ENCODE measurements at regions of chr3 and their contacts with region 1.

Region 1: DNA sequence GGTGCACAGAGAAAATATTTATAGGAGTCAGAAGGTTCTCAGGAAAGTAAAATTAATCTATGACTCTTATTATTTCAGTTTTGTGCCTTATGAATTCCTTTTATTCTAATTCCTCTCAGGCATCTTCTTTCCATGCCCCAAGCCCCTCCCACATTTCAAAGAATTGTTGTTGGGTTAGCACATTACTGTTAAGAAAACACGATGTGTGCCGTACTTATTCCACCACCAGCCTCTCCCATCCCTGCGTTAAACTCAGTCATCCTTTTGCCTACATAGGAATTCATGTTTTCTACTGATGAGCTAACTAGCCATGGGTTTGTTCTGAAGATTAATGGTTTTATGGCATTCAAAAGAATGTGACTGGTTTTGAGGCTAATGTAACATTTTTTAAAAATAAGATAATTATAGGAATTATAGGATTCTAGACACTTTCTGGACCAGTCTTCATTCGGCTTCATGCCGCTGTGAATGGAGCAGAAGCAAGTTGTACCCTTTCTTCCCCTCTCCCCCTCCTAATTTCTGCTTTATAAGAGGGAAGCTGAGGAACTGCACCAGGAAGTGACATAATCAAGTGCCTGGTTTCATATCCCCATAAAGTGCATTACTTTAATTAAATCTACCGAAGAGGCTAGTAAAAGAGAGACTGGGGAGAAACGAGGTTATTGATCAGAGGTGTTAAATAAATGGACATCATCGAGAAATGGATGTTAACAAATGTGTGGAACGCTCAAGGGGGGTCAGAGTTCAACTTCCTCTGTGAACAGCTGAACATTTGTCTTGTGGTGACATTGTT is 12.3 kb upstream of the MB21D2 start:
- DNase-seq: no peak
- ATAC-seq: peak in 2 of 8 donors; percentile 37 to 39
- H3K4me3 ChIP-seq: no peak overlapping the region
- H3K27ac ChIP-seq: peak overlapping the region in 1 of 10 donors; percentile 44
- H3K4me1 ChIP-seq: peaks cover 0 to 19% (median 0%) of the 10 kb centered on the region in 9 donors
- H3K27me3 ChIP-seq: no peaks in the 10 kb centered on the region
- CTCF ChIP-seq: no peak

Region 2: DNA sequence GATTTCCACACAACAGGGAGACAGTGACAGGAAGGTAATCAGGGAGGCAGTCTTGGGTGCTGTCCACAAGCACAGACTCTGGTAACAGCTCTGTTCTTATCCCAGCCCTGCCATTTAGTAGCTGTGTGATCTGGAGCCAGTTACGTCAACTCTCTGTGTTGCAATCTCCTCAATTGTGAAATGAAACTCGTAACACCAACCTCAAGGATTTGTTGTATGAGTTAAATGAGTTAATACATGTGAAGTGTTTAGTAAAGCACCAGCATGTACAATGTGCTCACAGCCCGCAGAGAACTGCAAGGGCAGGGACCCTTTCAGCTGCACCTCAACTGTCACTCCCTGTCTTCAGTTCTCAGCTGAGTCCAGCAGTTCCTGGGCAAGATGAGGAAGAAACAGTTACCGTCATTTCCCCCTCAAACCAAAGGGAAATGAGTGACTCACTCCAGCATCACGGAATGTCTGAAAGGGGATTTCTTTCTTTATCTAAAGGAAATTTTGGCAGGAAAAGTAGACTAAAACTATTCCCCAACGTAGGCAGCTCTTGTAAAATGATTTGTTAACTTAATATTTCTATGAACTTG is 27.6 kb after region 1 on chr3:
- intact Hi-C with region 1: no loop called
- DNase-seq: peak in 1 of 2 donors; percentile 64
- ATAC-seq: peak; percentile 79 to 98 (median 94)
- H3K4me3 ChIP-seq: peak overlapping the region in 5 of 10 donors; percentile 10 to 20 (median 15)
- H3K27ac ChIP-seq: peak overlapping the region in 8 of 10 donors; percentile 36 to 92 (median 76)
- H3K4me1 ChIP-seq: peaks cover 0 to 27% (median 6%) of the 10 kb centered on the region in 9 donors
- H3K27me3 ChIP-seq: no peaks in the 10 kb centered on the region
- CTCF ChIP-seq: no peak

Region 3: GRCh38 chr3:193030276-193030675 is 100.3 kb after region 1 on chr3:
- intact Hi-C with region 1: loop called in 1 of 10 experiments (anchors 10 kb)
- DNase-seq: no peak
- ATAC-seq: no peak
- H3K4me3 ChIP-seq: no peak overlapping the region
- H3K27ac ChIP-seq: no peak overlapping the region
- H3K4me1 ChIP-seq: no peaks in the 10 kb centered on the region
- H3K27me3 ChIP-seq: peaks cover 0 to 5% (median 0%) of the 10 kb centered on the region in 7 donors
- CTCF ChIP-seq: no peak

Region 4: GRCh38 chr3:193040836-193041672 is 111.1 kb after region 1 on chr3:
- intact Hi-C with region 1: loop called in 3 of 10 experiments (anchors 10 kb)
- DNase-seq: peak in 1 of 2 donors; percentile 11
- ATAC-seq: peak in 5 of 8 donors; percentile 23 to 65 (median 48)
- H3K4me3 ChIP-seq: no peak overlapping the region
- H3K27ac ChIP-seq: no peak overlapping the region
- H3K4me1 ChIP-seq: no peaks in the 10 kb centered on the region
- H3K27me3 ChIP-seq: no peaks in the 10 kb centered on the region
- CTCF ChIP-seq: peak; percentile 16 to 76 (median 58)

Measured in heart right ventricle (tissue), 16 donors.